Thyroid gland (tissue), 4 donors: ENCODE measurements at regions of chr6 and their contacts with region 1.

Region 1: DNA sequence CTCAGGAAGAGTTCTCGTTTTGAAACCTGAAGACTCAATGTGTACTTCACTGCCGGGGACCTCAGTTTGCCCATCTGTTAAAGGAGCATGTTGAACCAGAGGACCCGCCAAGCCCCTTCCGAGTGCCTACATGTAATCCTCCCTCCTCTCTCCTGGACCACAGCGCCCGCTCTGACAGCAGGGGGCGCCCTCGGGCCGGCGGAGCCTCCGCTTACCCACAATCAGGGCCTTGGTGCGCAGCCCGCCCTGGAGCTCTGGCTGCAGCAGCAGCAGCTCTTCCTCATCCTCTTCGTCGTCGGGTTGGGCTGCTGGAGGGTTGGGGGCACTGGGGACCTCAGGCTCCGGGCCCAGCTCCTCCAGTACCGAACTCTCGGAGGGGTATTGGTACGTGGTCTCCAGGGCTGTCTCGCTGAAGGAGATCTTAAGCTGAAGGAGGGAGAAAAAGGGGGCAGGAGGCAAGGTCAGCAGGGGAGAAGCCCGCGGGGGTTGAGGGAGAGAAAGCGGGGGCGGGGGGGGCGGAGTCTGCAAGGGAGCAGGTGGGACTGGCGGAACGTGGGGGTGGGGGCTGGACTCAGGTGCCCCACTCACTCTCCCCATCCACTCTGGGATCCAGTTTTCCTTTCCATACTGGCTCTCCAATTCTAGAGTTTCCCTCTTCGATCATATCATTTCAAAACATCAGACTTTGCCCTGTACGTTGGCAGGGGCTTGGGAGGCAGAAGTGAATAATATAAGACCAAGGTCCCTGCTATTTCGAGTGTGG is 6.3 kb upstream of the DHX16 start:
- DNase-seq: peak; percentile 83 to 88
- H3K4me3 ChIP-seq: no peak overlapping the region
- H3K27ac ChIP-seq: peak overlapping the region in 2 of 3 donors; percentile 24 to 28
- H3K4me1 ChIP-seq: peaks cover 4 to 36% of the 10 kb centered on the region in 2 donors
- H3K27me3 ChIP-seq: no peaks in the 10 kb centered on the region
- CTCF ChIP-seq: peak; percentile 90 to 97 (median 94)
- POLR2A ChIP-seq: no peak

Region 2: GRCh38 chr6:30721198-30722024 is 42.3 kb after region 1 on chr6:
- intact Hi-C with region 1: loop called (anchors 2 kb)
- DNase-seq: peak; percentile 92 to 93
- H3K4me3 ChIP-seq: peak overlapping the region; percentile 27 to 87 (median 62)
- H3K27ac ChIP-seq: peak overlapping the region; percentile 89 to 96 (median 95)
- H3K4me1 ChIP-seq: peaks cover 19 to 41% of the 10 kb centered on the region in 2 donors
- H3K27me3 ChIP-seq: no peaks in the 10 kb centered on the region
- CTCF ChIP-seq: peak in 3 of 6 experiments; percentile 50 to 58 (median 56)
- POLR2A ChIP-seq: peak in 1 of 2 donors; percentile 68